GM23248 (cell line): ENCODE measurements at regions of chr16 and their contacts with region 1.

Region 1: DNA sequence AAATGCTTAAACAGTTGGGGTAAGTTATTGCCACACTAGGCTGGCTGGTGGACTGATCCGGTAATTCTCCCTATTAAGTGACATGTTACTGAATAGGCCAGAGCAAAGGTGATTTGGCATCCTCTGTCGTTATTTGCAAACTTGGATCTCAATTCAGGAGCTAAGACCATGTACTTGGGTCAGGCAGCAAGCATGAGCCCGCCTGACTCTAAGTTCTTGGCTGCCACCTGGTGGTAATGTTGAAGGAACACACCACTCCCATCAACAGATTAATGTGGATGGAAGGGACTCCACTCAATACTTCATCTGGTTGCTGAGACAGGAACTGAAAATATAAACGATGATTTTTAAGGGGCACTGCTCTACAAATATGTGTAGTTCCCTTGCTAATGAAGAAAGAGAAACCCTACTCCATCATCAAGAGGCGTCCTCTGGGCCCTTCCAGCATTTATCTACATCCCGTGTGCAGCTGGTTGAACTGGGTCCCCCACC is 70.8 kb downstream of the EMP2 start:
- DNase-seq: peak; percentile 85
- H3K4me3 ChIP-seq: no peak overlapping the region
- H3K27ac ChIP-seq: no peak overlapping the region
- H3K4me1 ChIP-seq: no peaks in the 10 kb centered on the region
- H3K27me3 ChIP-seq: no peaks in the 10 kb centered on the region

Region 2: DNA sequence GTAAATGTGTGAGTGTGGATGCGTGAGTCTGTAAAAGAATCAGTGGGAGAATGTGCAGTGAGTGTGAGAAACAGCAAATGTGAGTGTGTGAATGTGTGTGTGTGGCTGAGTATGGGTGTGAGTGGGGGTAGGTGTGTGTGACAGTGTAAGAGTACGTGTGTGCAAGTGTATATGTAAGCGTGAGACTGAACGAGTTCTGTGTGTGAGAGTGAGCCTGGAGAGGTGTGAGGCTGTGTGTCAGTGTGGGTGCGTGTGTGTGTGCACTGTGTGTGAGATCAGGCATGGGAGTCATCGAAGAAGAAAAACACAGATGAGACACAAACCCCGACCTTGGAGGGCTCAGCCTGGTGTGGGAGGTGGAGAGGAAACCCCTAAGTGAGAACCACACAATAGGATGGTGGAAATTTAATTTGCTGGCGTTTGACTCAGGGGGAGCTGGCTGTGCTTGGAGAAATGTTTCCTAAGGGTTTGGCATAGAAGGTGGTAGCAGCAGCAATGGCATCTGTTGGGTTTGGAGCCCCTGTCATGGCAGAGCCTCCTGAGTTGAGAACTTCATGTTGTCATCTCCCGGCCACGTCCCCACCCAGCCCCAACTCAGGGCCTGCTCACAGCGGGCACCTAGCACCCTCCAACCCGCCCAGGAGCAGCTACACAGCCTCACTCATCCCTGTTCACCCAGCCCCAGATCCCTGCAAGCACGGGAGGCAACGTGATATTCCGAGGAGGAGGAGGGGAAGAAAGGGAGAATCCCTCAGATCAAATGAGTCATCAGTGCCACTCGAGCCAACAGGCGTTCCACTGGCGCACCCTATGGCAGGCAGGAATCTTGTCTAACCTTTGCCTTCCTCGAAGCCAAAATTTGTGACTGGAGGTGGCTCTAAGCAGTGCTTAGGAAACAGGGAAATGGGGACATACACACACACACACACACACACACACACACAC is 219.8 kb after region 1 on chr16:
- in situ Hi-C with region 1: loop called (anchors 5 kb)
- DNase-seq: peak; percentile 67
- H3K4me3 ChIP-seq: no peak overlapping the region
- H3K27ac ChIP-seq: no peak overlapping the region
- H3K4me1 ChIP-seq: no peaks in the 10 kb centered on the region
- H3K27me3 ChIP-seq: no peaks in the 10 kb centered on the region; the same call in 1 of the 2 replicates